Activated B cell treated with CpG ODN at 0.5 μM for 24 hours (primary cell): ENCODE measurements at regions of chr7 and their contacts with region 1.

Region 1: GRCh38 chr7:100705753-100706671 is at the start of gene POP7:
- DNase-seq: peak; percentile 98
- ATAC-seq: peak; percentile 94
- H3K4me3 Mint-ChIP-seq: peak within 1 kb of the TSS; percentile 93
- H3K27ac Mint-ChIP-seq: peak within 1 kb of the TSS; percentile 88
- H3K4me1 Mint-ChIP-seq: peaks cover 16% of the 10 kb centered on the region
- H3K27me3 Mint-ChIP-seq: no peaks in the 10 kb centered on the region
- CTCF ChIP-seq: no peak
- total RNA-seq, gene POP7: 21.5 and 21.7 TPM in 2 replicates

Region 2: GRCh38 chr7:100380196-100380595 is 325.8 kb before region 1 on chr7:
- CTCF ChIA-PET with region 1: no interaction called
- POLR2A ChIA-PET with region 1: no interaction called
- intact Hi-C with region 1: no loop called
- DNase-seq: no peak
- ATAC-seq: no peak
- H3K4me3 Mint-ChIP-seq: no peak overlapping the region
- H3K27ac Mint-ChIP-seq: no peak overlapping the region
- H3K4me1 Mint-ChIP-seq: peaks cover 11% of the 10 kb centered on the region
- H3K27me3 Mint-ChIP-seq: no peaks in the 10 kb centered on the region
- CTCF ChIP-seq: no peak

Region 3: GRCh38 chr7:100611974-100612729 is 93.9 kb before region 1 on chr7 and contains the start of gene MOSPD3:
- CTCF ChIA-PET with region 1: interaction called, 10 read pairs
- POLR2A ChIA-PET with region 1: interaction called, 11 read pairs
- intact Hi-C with region 1: loop called (anchors 5 kb)
- DNase-seq: peak; percentile 99
- ATAC-seq: peak; percentile 91
- H3K4me3 Mint-ChIP-seq: peak within 1 kb of the TSS; percentile 99
- H3K27ac Mint-ChIP-seq: peak within 1 kb of the TSS; percentile 100
- H3K4me1 Mint-ChIP-seq: peaks cover 19% of the 10 kb centered on the region
- H3K27me3 Mint-ChIP-seq: no peaks in the 10 kb centered on the region
- CTCF ChIP-seq: no peak
- total RNA-seq, gene MOSPD3: 10.5 and 11.9 TPM in 2 replicates

Region 4: DNA sequence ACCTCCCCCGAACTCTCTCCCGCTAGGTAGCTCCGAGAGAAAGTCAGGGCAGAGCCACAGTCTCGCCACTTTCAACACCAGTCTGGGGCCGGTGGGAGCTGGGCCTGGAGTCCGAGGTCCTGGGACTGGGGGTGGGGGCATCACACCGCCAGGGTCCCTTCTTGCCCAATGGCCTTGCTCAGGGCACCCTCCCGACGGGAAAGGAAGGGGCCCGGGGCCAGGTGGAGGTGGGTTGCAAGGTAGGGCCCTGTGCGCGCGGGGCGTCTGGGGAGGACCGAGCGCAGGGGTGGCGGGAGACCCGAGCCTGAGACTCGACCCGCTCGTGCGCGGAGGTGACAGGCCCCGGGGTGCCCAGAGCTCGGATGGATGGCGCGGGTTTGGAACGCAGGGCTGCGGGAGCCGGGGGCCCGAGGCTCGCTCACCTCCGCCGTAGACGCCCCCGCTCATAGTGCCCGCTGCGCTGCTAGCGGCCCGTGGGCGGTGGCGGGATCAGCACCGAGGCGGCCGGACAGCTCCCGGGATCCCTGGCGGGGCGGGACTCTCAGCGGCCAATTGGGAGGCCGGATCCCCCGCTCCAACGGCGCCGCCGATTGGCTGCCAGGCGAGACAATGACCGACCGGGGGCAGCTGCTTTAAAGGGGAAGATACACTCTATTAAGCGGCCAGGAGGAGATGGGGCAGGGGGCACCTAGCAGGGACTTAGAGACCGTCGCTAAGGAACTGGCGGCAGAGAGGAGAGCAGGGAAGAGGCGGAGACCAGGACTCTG is 49.9 kb before region 1 on chr7 and contains the start of gene ACTL6B:
- CTCF ChIA-PET with region 1: no interaction called
- POLR2A ChIA-PET with region 1: no interaction called
- intact Hi-C with region 1: loop called (anchors 1 kb)
- DNase-seq: no peak
- ATAC-seq: peak; percentile 42
- H3K4me3 Mint-ChIP-seq: no peak within 1 kb of the TSS
- H3K27ac Mint-ChIP-seq: no peak within 1 kb of the TSS
- H3K4me1 Mint-ChIP-seq: no peaks in the 10 kb centered on the region
- H3K27me3 Mint-ChIP-seq: peaks cover 36% of the 10 kb centered on the region
- CTCF ChIP-seq: no peak
- total RNA-seq, gene ACTL6B: not detected in 2 replicates

Region 5: GRCh38 chr7:100726996-100727761 is 21.2 kb after region 1 on chr7:
- CTCF ChIA-PET with region 1: interaction called, 19 read pairs
- POLR2A ChIA-PET with region 1: interaction called, 3 read pairs
- intact Hi-C with region 1: loop called (anchors 1 kb)
- DNase-seq: no peak
- ATAC-seq: no peak
- H3K4me3 Mint-ChIP-seq: no peak overlapping the region
- H3K27ac Mint-ChIP-seq: no peak overlapping the region
- H3K4me1 Mint-ChIP-seq: peaks cover 5% of the 10 kb centered on the region
- H3K27me3 Mint-ChIP-seq: peaks cover 19% of the 10 kb centered on the region
- CTCF ChIP-seq: no peak

Region 6: GRCh38 chr7:100874577-100875355 is 168.8 kb after region 1 on chr7 and contains the start of gene SRRT:
- CTCF ChIA-PET with region 1: no interaction called
- POLR2A ChIA-PET with region 1: interaction called, 9 read pairs
- intact Hi-C with region 1: loop called (anchors 1 kb)
- DNase-seq: peak; percentile 96
- ATAC-seq: peak; percentile 96
- H3K4me3 Mint-ChIP-seq: peak within 1 kb of the TSS; percentile 99
- H3K27ac Mint-ChIP-seq: peak within 1 kb of the TSS; percentile 98
- H3K4me1 Mint-ChIP-seq: peaks cover 45% of the 10 kb centered on the region
- H3K27me3 Mint-ChIP-seq: no peaks in the 10 kb centered on the region
- CTCF ChIP-seq: no peak
- total RNA-seq, gene SRRT: 229 and 244 TPM in 2 replicates

Region 7: GRCh38 chr7:101077303-101078089 is 371.5 kb after region 1 on chr7:
- CTCF ChIA-PET with region 1: no interaction called
- POLR2A ChIA-PET with region 1: interaction called, 4 read pairs
- intact Hi-C with region 1: loop called (anchors 1 kb)
- DNase-seq: peak; percentile 67
- ATAC-seq: peak; percentile 94
- H3K4me3 Mint-ChIP-seq: peak overlapping the region; percentile 8
- H3K27ac Mint-ChIP-seq: peak overlapping the region; percentile 33
- H3K4me1 Mint-ChIP-seq: peaks cover 9% of the 10 kb centered on the region
- H3K27me3 Mint-ChIP-seq: no peaks in the 10 kb centered on the region
- CTCF ChIP-seq: peak; percentile 32